ENCODE measurements at regions of chr1 and their contacts with region 1.

Region 1: DNA sequence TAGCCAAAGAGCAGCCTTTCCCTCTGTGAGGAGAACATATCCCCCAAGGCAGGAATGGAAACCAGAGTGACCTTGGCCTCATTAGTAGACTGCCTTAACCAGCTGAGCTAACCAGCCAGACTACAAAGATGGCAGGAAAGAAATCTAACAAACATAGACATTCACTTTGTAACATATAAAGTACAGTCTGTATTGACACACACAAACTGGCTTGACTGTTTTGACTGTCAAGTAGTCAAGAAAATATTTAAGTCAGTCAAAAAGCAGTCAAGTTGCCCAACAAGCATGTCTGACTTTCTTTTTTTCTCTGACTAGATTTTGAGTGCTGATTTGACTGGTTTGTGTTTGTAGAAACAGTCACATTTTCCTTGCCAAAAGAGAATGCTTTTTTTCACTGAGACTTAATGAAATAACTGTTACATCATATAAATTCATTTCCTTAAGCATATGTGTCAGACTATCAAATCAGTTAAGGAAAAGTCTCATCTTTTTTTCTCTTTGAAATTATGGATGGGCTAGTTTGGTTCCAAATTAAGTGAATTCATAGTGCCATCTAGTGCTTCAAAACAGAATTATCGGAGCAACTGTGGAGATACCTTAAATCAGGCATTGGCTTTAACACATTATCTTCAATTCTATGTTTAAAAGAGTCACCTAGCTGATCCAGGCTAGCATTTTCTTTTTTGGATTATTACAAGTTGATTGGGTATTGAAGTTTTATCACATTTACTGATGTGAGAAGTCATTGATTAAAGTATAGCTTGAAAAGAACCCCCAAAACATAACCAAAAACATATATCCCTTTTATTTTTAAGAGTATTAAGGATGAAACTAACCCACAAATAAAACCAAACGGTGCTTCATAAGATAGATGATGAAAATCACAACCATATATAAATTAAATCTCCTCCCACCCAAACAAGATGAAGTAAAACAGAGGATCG is 75.0 kb downstream of the ATP6V1G3 start:
- DNase-seq: peak; percentile 49
- H3K4me3 ChIP-seq: no peak overlapping the region
- CTCF ChIP-seq: peak; percentile 30

Region 2: DNA sequence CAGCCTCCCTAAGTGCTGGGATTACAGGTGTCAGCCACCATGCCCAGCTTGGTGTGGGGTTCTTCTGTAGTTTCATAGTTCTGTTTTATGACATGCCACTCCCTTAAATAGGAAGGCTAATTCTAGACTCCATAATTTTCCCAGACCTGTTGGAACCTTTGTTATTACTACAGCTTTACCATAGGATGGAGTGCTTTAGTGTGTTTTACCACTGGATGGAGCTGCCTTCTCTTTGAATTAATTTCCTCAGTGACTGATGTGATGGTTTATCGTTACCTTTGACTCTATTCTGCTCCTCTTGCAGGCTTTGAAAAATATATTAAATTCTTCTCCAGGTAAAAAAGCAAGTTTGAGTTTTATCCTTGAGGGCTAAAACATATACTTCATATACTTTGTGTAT is 393.3 kb before region 1 on chr1:
- CTCF ChIA-PET with region 1: interaction called, 10 read pairs
- POLR2A ChIA-PET with region 1: no interaction called
- DNase-seq: no peak
- H3K4me3 ChIP-seq: no peak overlapping the region
- CTCF ChIP-seq: no peak

Region 3: GRCh38 chr1:198359024-198359653 is 106.3 kb before region 1 on chr1:
- CTCF ChIA-PET with region 1: no interaction called
- POLR2A ChIA-PET with region 1: no interaction called
- DNase-seq: no peak
- H3K4me3 ChIP-seq: no peak overlapping the region
- CTCF ChIP-seq: no peak

Region 4: DNA sequence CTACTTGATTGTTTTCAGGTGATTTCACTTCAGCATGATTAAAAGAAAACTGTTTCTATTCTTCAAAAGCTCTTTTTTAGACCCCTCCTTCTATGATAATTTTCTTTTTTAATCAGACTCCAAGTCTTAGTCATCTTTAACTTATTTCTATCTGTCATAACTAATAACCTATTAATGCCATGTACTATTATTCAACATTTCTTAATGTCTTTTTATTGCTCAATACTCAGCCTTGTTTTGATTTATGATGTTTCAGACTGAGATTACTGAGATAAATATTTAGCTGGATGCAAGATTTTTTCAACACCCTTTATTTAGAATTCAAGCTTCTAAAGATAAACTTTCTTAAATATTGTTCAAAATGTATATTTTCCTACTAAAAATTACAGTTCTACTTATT is 21.4 kb after region 1 on chr1:
- CTCF ChIA-PET with region 1: interaction called, 14 read pairs
- POLR2A ChIA-PET with region 1: no interaction called
- DNase-seq: no peak
- H3K4me3 ChIP-seq: no peak overlapping the region
- CTCF ChIP-seq: no peak

Region 5: GRCh38 chr1:198681831-198682759 is 216.6 kb after region 1 on chr1:
- CTCF ChIA-PET with region 1: interaction called, 66 read pairs
- POLR2A ChIA-PET with region 1: no interaction called
- DNase-seq: peak; percentile 91
- H3K4me3 ChIP-seq: no peak overlapping the region
- CTCF ChIP-seq: no peak

Measured in AG04449 (cell line).